Ovary (tissue), 10 donors: ENCODE measurements at regions of chr1 and their contacts with region 1.

Region 1: GRCh38 chr1:76705560-76705959 is 161.7 kb upstream of the ST6GALNAC5 start:
- DNase-seq: no peak
- H3K4me3 ChIP-seq: no peak overlapping the region
- H3K27ac ChIP-seq: no peak overlapping the region
- H3K4me1 ChIP-seq: no peaks in the 10 kb centered on the region
- H3K27me3 ChIP-seq: no peaks in the 10 kb centered on the region
- CTCF ChIP-seq: no peak
- EP300 ChIP-seq: no peak
- POLR2A ChIP-seq: no peak

Region 2: DNA sequence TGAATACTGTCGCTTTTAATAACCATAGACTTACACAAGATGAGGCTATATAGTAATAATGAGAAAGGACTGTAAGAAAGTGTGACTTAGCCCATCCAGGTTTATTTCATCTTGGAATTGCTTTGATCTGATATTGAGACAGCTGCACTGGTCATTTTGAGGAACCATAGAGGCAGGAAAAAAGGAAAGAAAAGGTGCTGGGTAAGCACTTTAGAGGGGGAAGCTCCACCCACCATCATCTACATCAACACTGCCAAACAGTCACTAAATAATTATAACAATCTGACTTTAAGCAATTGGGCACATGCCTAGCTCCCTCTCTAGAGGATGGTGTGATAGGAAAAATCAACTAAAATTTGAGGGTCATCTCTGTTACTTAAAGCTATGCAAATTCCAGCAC is 701.6 kb before region 1 on chr1:
- intact Hi-C with region 1: loop called in 1 of 4 experiments (anchors 5 kb)
- DNase-seq: no peak
- H3K4me3 ChIP-seq: no peak overlapping the region
- H3K27ac ChIP-seq: no peak overlapping the region
- H3K4me1 ChIP-seq: no peaks in the 10 kb centered on the region
- H3K27me3 ChIP-seq: no peaks in the 10 kb centered on the region
- CTCF ChIP-seq: no peak
- EP300 ChIP-seq: no peak
- POLR2A ChIP-seq: no peak

Region 3: DNA sequence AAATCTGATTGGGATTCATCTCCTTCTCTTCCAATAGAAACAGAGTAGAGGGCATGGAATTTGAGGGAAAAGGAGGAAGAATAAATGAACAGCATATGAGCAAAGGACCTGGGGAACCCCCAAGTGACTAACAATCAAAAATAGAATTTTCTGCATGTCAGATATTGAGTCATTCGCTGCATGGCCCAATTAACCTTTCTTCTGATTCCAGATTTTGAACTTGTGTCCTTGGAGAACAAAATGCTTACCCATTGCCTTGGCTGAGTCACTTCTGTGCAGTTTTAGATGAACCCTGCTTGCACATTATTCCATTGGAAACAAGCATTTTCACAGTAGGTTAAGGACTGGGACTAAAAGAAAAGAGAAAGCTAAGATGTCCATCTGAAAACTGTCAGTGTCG is 240.5 kb before region 1 on chr1:
- intact Hi-C with region 1: no loop called
- DNase-seq: no peak
- H3K4me3 ChIP-seq: no peak overlapping the region
- H3K27ac ChIP-seq: no peak overlapping the region
- H3K4me1 ChIP-seq: no peaks in the 10 kb centered on the region
- H3K27me3 ChIP-seq: no peaks in the 10 kb centered on the region
- CTCF ChIP-seq: no peak
- EP300 ChIP-seq: no peak
- POLR2A ChIP-seq: no peak